ENCODE measurements at regions of chr10 and their contacts with region 1.

Region 1: DNA sequence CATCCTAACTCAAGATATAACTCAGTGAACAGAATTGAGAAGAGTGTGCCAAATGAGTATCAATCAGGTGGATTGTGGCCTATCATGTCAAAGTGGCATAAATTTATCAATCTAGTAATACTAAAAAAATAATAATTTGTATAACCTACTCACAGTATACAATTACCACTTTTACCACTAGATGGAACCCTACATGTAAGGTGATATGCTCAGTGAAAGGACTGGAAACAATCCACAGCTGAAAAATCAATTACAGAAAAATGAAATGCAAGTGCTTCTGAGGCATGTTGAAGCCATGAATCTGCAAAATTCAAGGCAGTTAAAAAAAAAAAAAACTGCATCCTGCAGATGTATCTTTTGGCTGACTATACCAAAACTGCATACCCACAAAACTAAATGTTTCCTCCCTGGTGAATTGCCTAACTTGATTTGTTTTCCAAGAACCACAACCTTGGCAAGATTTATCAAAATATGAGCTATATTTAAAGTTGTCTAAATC is 13.9 kb downstream of the ARHGAP19 start:
- DNase-seq: peak in 7 of 9 donors; percentile 18 to 65 (median 55)
- ATAC-seq: peak; percentile 91
- H3K4me3 ChIP-seq: no peak overlapping the region
- H3K4me3 Mint-ChIP-seq: no peak overlapping the region
- H3K27ac ChIP-seq: no peak overlapping the region
- H3K27ac Mint-ChIP-seq: peak overlapping the region in 3 of 9 donors; percentile 21 to 59 (median 43)
- H3K4me1 ChIP-seq: no peaks in the 10 kb centered on the region
- H3K4me1 Mint-ChIP-seq: peaks cover 0 to 22% (median 17%) of the 10 kb centered on the region in 7 donors
- H3K27me3 ChIP-seq: no peaks in the 10 kb centered on the region
- H3K27me3 Mint-ChIP-seq: no peaks in the 10 kb centered on the region

Region 2: DNA sequence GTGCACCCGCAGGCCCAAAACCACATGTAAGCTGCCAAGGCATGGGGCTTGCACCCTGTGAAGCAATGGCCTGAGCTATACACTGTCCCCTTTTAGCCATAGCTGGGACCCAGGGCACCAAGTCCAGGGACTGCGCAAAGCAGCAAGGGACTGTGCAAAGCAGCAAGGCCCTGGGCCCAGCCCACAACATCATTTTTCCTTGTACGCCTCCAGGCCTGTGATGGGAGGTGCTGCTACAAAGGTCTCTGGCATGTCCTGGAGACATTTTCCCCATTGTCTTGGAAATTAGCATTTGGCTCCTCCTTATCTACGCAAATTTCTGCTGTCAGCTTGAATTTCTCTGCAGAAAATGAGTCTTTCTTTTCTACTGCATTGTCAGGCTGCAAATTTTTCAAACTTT is 10.9 kb before region 1 on chr10:
- CTCF ChIA-PET with region 1: interaction called, 15 read pairs
- POLR2A ChIA-PET with region 1: interaction called, 4 read pairs
- intact Hi-C with region 1: no loop called
- DNase-seq: no peak
- ATAC-seq: no peak
- H3K4me3 ChIP-seq: no peak overlapping the region
- H3K4me3 Mint-ChIP-seq: no peak overlapping the region
- H3K27ac ChIP-seq: no peak overlapping the region
- H3K27ac Mint-ChIP-seq: no peak overlapping the region
- H3K4me1 ChIP-seq: no peaks in the 10 kb centered on the region
- H3K4me1 Mint-ChIP-seq: peaks cover 0 to 28% (median 9%) of the 10 kb centered on the region in 7 donors
- H3K27me3 ChIP-seq: no peaks in the 10 kb centered on the region
- H3K27me3 Mint-ChIP-seq: no peaks in the 10 kb centered on the region

Region 3: GRCh38 chr10:97307866-97308780 is 29.6 kb after region 1 on chr10:
- CTCF ChIA-PET with region 1: interaction called, 11 read pairs
- POLR2A ChIA-PET with region 1: no interaction called
- intact Hi-C with region 1: no loop called
- DNase-seq: no peak
- ATAC-seq: no peak
- H3K4me3 ChIP-seq: no peak overlapping the region
- H3K4me3 Mint-ChIP-seq: no peak overlapping the region
- H3K27ac ChIP-seq: no peak overlapping the region
- H3K27ac Mint-ChIP-seq: peak overlapping the region in 1 of 9 donors; percentile 17
- H3K4me1 ChIP-seq: no peaks in the 10 kb centered on the region
- H3K4me1 Mint-ChIP-seq: no peaks in the 10 kb centered on the region
- H3K27me3 ChIP-seq: no peaks in the 10 kb centered on the region
- H3K27me3 Mint-ChIP-seq: no peaks in the 10 kb centered on the region

Region 4: DNA sequence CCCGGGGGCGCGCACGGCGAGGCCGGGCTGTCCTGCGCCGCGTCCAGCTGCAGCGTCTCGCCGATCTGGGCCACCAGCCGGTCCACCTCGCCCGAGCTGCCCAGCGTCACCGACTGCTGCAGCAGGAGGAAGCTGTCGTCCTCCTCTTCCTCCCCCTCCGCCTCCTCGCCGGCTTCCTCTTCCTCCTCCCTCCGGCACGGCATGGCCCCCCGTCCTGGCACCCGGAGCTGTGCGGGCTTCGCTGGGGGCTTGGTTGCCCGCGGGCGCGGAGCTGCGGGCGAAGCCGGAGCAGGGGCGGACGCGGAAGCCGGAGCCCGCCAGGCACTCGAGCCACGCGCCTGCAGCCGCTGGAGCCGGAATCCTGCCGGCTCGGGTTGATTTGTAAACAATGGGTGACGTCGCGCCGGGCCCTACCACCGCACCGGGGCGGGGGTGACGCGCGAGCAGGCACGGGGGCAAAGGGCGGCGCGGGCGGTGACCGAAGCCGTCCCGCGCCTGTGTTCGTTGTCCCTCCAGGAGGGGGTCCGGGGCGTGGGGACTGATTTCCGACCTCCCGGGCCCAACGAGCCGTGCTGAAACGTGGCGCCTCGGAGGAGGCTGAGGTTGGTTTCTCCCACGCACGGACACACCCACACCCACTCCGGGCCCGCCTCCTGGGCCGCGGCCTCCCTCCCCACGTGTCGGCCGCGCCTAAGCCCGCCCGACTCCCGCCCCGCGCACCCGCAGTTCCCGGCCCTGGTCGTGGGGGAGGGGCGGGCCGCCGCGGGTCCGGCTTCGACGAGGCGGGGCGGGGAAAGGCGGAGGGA is 56.0 kb after region 1 on chr10 and contains the start of gene FRAT2:
- CTCF ChIA-PET with region 1: interaction called, 12 read pairs
- POLR2A ChIA-PET with region 1: interaction called, 20 read pairs
- intact Hi-C with region 1: loop called (anchors 2 to 5 kb)
- DNase-seq: peak; percentile 85 to 96 (median 92)
- ATAC-seq: peak; percentile 94
- H3K4me3 ChIP-seq: peak within 1 kb of the TSS; percentile 78
- H3K4me3 Mint-ChIP-seq: peak within 1 kb of the TSS; percentile 88 to 98 (median 94)
- H3K27ac ChIP-seq: peak within 1 kb of the TSS; percentile 97
- H3K27ac Mint-ChIP-seq: peak within 1 kb of the TSS; percentile 89 to 97 (median 93)
- H3K4me1 ChIP-seq: peaks cover 20 to 24% of the 10 kb centered on the region in 2 donors
- H3K4me1 Mint-ChIP-seq: peaks cover 28 to 48% (median 42%) of the 10 kb centered on the region in 7 donors
- H3K27me3 ChIP-seq: no peaks in the 10 kb centered on the region
- H3K27me3 Mint-ChIP-seq: peaks cover 0 to 36% (median 0%) of the 10 kb centered on the region in 5 donors
- total RNA-seq, gene FRAT2: 9.3 to 39.7 (median 29.8) TPM

Region 5: DNA sequence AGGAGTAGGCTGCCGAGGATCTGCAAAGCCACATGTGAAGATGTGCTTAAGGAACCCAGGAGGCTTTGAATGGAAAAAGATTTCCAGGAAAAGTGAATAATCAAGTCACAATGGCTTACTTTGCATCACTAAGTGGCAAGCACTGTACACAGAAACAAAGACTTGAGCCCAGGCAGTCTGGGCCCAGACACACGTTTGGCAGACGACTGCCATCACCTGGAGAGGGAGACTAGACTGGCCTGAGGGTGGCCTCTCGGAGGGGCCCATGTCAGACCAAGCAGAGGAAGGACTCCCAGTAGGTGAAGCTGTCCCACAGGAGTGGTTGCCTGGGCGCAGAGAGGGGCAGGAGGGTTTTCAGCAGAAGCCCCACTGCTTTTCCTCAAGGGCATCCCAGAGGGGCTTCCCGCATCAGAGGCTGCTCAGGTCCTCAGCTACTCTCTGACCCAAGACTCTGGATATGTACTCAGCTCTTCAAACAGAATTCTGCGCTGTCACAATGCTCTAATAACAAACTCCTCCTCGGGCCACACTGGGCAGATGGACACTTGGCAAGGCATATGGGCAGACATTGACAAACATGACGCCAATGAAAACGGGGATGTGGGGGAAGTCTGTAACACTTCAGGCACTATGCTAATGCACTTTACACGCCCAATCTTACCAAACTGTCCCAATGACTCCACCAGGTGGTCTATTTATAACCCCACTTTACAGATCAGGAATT is 83.9 kb after region 1 on chr10:
- CTCF ChIA-PET with region 1: interaction called, 83 read pairs
- POLR2A ChIA-PET with region 1: no interaction called
- intact Hi-C with region 1: loop called in 1 of 2 experiments (anchors 2 kb)
- DNase-seq: no peak
- ATAC-seq: no peak
- H3K4me3 ChIP-seq: no peak overlapping the region
- H3K4me3 Mint-ChIP-seq: no peak overlapping the region
- H3K27ac ChIP-seq: no peak overlapping the region
- H3K27ac Mint-ChIP-seq: no peak overlapping the region
- H3K4me1 ChIP-seq: no peaks in the 10 kb centered on the region
- H3K4me1 Mint-ChIP-seq: peaks cover 0 to 9% (median 0%) of the 10 kb centered on the region in 7 donors
- H3K27me3 ChIP-seq: no peaks in the 10 kb centered on the region
- H3K27me3 Mint-ChIP-seq: no peaks in the 10 kb centered on the region

Measured in naive thymus-derived CD4-positive, alpha-beta T cell (primary cell).